ENCODE measurements at regions of chr15 and their contacts with region 1.

Region 1: DNA sequence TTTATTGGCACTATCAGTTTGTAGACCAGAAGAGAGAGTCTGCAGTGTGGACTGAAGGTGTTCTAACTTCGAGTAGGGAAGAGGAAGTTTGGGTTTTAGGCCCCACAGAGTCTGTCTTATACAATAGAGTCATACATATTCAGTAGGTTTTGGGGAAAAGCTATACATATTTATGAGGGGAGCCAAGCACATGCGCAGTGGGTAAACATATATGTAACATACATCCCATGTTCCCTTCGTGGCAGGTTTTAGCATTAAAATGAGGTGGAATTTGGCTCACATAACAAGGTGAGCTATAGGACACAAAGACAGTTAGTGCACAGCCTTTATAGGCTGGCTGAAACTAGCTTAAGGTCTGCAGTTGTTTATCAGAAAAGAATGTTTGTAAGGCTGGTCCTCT is 4.9 kb downstream of the GALK2 start:
- DNase-seq: no peak

Region 2: GRCh38 chr15:49023354-49023753 is 151.5 kb before region 1 on chr15:
- intact Hi-C with region 1: no loop called
- DNase-seq: no peak

Region 3: GRCh38 chr15:49847937-49848823 is 673.3 kb after region 1 on chr15:
- intact Hi-C with region 1: loop called in 1 of 2 experiments (anchors 5 kb)
- DNase-seq: no peak